ENCODE measurements at regions of chr14 and their contacts with region 1.

Region 1: DNA sequence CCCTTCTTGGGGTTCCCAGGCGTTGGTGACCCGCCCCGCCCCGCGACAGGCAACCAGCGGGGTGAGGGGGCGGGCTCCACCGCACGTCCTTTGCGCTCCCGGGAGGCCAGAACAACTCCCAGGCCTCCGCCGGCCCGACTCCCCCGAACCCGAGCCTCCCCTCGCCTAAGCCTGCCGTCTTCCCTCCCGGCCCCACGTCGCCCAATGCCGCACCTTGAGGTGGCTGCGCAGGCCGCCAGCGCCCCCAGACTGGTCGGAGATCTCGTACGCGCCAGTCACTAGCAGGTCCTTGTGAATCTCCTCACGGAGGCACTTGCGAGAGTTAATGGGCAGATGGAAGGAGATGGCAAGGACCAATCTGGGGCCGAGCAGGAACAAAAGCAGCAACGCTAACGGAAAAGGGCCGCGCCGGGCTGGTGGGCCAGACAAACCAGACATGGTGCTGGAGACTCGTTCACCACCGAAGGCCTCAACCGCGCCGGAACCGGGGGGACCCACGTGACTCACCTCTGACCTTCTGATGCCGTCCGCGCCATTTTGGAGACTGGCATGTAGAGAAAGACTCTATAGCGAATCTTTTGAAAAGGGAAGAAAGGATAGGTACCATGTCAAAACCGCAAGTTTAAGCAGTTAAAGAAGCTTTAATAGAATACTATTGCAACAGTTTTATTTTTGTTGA is at the start of gene TMED10:
- DNase-seq: peak; percentile 86 to 96 (median 94)
- ATAC-seq: peak; percentile 84
- H3K4me3 ChIP-seq: peak within 1 kb of the TSS; percentile 93
- H3K4me3 Mint-ChIP-seq: peak within 1 kb of the TSS; percentile 77 to 96 (median 91)
- H3K27ac ChIP-seq: peak within 1 kb of the TSS; percentile 98
- H3K27ac Mint-ChIP-seq: peak within 1 kb of the TSS; percentile 95 to 99 (median 97)
- H3K4me1 ChIP-seq: peaks cover 27 to 33% of the 10 kb centered on the region in 2 donors
- H3K4me1 Mint-ChIP-seq: peaks cover 27 to 60% (median 53%) of the 10 kb centered on the region in 7 donors
- H3K27me3 ChIP-seq: no peaks in the 10 kb centered on the region
- H3K27me3 Mint-ChIP-seq: peaks cover 0 to 7% (median 0%) of the 10 kb centered on the region in 5 donors
- total RNA-seq, gene TMED10: 155 to 233 (median 171) TPM

Region 2: GRCh38 chr14:74881431-74882361 is 294.6 kb before region 1 on chr14 and contains the start of gene DLST:
- CTCF ChIA-PET with region 1: no interaction called
- POLR2A ChIA-PET with region 1: no interaction called
- intact Hi-C with region 1: loop called in 1 of 2 experiments (anchors 5 kb)
- DNase-seq: peak; percentile 74 to 94 (median 81)
- ATAC-seq: peak; percentile 91
- H3K4me3 ChIP-seq: peak within 1 kb of the TSS; percentile 77
- H3K4me3 Mint-ChIP-seq: peak within 1 kb of the TSS; percentile 94 to 100 (median 98)
- H3K27ac ChIP-seq: peak within 1 kb of the TSS; percentile 91
- H3K27ac Mint-ChIP-seq: peak within 1 kb of the TSS; percentile 96 to 100 (median 99)
- H3K4me1 ChIP-seq: peaks cover 30 to 34% of the 10 kb centered on the region in 2 donors
- H3K4me1 Mint-ChIP-seq: peaks cover 49 to 82% (median 72%) of the 10 kb centered on the region in 7 donors
- H3K27me3 ChIP-seq: no peaks in the 10 kb centered on the region
- H3K27me3 Mint-ChIP-seq: no peaks in the 10 kb centered on the region
- total RNA-seq, gene DLST: 90.0 to 132 (median 96.5) TPM

Region 3: DNA sequence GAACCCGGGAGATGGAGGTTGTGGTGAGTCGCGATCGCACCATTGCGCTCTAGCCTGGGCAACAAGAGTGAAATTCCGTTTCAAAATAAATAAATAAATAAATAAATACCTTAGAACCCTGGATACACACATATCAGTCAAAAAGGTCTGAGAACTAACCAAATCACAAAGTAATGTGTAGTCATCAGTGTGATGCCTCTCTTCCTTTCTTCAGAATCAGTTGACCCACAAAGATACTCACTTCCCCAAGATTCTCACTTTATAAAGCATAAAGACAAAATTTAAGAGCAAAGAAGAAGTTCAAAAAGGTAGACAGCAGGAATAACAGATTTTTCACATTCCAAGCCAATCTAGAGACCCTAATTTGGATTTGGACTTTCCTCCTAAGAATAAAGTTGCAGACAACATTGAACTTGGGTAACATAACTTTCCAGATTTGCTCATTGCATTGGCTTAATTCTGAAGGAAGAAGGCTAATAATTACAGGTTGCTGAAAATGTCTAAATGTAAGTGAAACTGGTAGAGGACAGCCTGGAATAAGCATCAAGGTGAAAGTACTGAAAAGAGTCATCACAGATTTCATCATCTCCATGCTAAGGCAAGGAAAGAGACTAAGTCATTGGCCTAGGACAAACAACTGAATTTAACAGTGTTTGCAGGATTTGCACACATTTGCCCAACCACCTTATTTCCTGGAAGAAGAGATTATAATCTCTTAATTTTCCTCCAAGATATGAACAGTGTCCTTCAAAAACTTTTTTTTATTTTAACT is 17.3 kb before region 1 on chr14:
- CTCF ChIA-PET with region 1: interaction called, 5 read pairs
- POLR2A ChIA-PET with region 1: interaction called, 5 read pairs
- intact Hi-C with region 1: loop called (anchors 2 kb)
- DNase-seq: no peak
- ATAC-seq: no peak
- H3K4me3 ChIP-seq: no peak overlapping the region
- H3K4me3 Mint-ChIP-seq: no peak overlapping the region
- H3K27ac ChIP-seq: no peak overlapping the region
- H3K27ac Mint-ChIP-seq: peak overlapping the region in 3 of 9 donors; percentile 43 to 64 (median 52)
- H3K4me1 ChIP-seq: peaks cover 12 to 20% of the 10 kb centered on the region in 2 donors
- H3K4me1 Mint-ChIP-seq: peaks cover 34 to 74% (median 65%) of the 10 kb centered on the region in 7 donors
- H3K27me3 ChIP-seq: no peaks in the 10 kb centered on the region
- H3K27me3 Mint-ChIP-seq: no peaks in the 10 kb centered on the region

Region 4: DNA sequence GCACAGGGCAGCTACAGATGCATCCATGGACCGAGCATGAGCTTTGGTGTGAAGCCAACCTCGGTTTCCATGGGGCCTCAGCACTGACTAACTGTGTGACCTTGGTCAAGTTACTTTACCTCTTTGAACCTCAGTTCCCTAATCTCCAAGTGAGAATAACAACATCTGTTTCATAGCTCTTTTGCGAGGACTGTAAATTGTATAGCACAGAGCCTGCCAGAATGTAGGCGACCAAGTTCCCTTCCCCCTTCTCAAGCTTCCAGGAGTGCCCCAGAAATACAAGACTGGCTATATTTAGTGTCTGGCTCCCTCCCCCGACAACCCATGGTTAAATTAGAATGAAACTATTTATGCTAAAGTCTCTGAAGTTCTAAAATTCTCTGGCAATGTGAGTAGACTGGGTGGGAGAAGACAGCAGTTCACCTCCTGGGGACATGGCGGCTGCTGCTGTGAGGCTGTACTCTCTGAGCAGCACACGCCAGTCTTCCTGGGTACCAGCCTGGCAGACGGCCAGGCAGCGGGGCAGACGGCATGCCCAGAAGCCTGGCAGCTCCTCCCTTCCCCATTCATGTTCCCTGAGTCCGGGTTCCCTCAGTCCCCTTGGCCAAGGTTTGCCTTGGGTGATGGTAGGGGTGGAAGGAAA is 22.1 kb after region 1 on chr14:
- CTCF ChIA-PET with region 1: no interaction called
- POLR2A ChIA-PET with region 1: no interaction called
- intact Hi-C with region 1: no loop called
- DNase-seq: no peak
- ATAC-seq: no peak
- H3K4me3 ChIP-seq: no peak overlapping the region
- H3K4me3 Mint-ChIP-seq: no peak overlapping the region
- H3K27ac ChIP-seq: no peak overlapping the region
- H3K27ac Mint-ChIP-seq: no peak overlapping the region
- H3K4me1 ChIP-seq: no peaks in the 10 kb centered on the region
- H3K4me1 Mint-ChIP-seq: peaks cover 0 to 13% (median 0%) of the 10 kb centered on the region in 7 donors
- H3K27me3 ChIP-seq: no peaks in the 10 kb centered on the region
- H3K27me3 Mint-ChIP-seq: peaks cover 0 to 16% (median 0%) of the 10 kb centered on the region in 5 donors

Region 5: DNA sequence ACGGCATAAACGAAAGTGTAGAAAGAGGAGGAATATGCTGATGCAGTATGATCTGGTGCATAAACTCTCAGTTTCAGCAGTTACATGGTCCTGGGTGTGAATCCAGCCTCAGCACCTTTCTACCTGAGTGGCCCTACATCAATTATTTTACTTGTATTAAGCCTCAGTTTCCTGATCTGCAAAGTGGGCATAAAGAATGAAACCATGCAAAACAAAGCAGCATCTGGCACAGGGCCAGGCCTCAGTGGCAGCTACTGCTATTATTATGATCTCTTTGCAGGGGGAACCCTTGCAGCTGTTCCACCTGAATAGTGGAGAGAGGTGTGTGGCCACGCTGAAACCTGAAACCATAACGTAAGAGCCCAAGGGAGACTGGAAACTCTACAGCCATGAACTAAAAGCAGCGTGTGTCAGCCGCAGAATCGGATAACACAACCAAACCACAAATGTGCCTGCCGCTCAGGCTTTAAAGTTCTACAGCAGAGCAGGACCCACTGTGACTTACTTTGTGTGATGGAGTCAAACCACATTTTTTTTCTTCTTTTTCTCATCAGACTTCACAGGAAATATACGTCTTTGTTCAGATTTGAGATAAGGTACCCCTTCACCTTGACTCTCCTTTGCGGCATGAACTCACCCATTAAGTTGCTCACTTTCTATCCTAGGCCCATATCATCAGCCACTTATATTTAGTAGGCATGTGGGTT is 73.1 kb after region 1 on chr14:
- CTCF ChIA-PET with region 1: interaction called, 3 read pairs
- POLR2A ChIA-PET with region 1: interaction called, 5 read pairs
- intact Hi-C with region 1: loop called (anchors 1 kb)
- DNase-seq: peak; percentile 46 to 96 (median 93)
- ATAC-seq: peak; percentile 86
- H3K4me3 ChIP-seq: peak overlapping the region; percentile 48
- H3K4me3 Mint-ChIP-seq: peak overlapping the region; percentile 58 to 83 (median 67)
- H3K27ac ChIP-seq: peak overlapping the region; percentile 81
- H3K27ac Mint-ChIP-seq: peak overlapping the region; percentile 83 to 98 (median 96)
- H3K4me1 ChIP-seq: peaks cover 51 to 61% of the 10 kb centered on the region in 2 donors
- H3K4me1 Mint-ChIP-seq: peaks cover 39 to 81% (median 72%) of the 10 kb centered on the region in 7 donors
- H3K27me3 ChIP-seq: no peaks in the 10 kb centered on the region
- H3K27me3 Mint-ChIP-seq: peaks cover 0 to 57% (median 0%) of the 10 kb centered on the region in 5 donors

Region 6: GRCh38 chr14:75293920-75294642 is 117.8 kb after region 1 on chr14:
- CTCF ChIA-PET with region 1: interaction called, 4 read pairs
- POLR2A ChIA-PET with region 1: interaction called, 4 read pairs
- intact Hi-C with region 1: loop called (anchors 1 kb)
- DNase-seq: peak; percentile 92 to 98 (median 96)
- ATAC-seq: peak; percentile 92
- H3K4me3 ChIP-seq: peak overlapping the region; percentile 61
- H3K4me3 Mint-ChIP-seq: peak overlapping the region; percentile 79 to 93 (median 91)
- H3K27ac ChIP-seq: peak overlapping the region; percentile 96
- H3K27ac Mint-ChIP-seq: peak overlapping the region; percentile 85 to 97 (median 94)
- H3K4me1 ChIP-seq: peaks cover 17 to 25% of the 10 kb centered on the region in 2 donors
- H3K4me1 Mint-ChIP-seq: peaks cover 10 to 26% (median 22%) of the 10 kb centered on the region in 7 donors
- H3K27me3 ChIP-seq: no peaks in the 10 kb centered on the region
- H3K27me3 Mint-ChIP-seq: peaks cover 0 to 24% (median 0%) of the 10 kb centered on the region in 5 donors

Measured in naive thymus-derived CD4-positive, alpha-beta T cell (primary cell).